ENCODE measurements at regions of chr11 and their contacts with region 1.

Region 1: DNA sequence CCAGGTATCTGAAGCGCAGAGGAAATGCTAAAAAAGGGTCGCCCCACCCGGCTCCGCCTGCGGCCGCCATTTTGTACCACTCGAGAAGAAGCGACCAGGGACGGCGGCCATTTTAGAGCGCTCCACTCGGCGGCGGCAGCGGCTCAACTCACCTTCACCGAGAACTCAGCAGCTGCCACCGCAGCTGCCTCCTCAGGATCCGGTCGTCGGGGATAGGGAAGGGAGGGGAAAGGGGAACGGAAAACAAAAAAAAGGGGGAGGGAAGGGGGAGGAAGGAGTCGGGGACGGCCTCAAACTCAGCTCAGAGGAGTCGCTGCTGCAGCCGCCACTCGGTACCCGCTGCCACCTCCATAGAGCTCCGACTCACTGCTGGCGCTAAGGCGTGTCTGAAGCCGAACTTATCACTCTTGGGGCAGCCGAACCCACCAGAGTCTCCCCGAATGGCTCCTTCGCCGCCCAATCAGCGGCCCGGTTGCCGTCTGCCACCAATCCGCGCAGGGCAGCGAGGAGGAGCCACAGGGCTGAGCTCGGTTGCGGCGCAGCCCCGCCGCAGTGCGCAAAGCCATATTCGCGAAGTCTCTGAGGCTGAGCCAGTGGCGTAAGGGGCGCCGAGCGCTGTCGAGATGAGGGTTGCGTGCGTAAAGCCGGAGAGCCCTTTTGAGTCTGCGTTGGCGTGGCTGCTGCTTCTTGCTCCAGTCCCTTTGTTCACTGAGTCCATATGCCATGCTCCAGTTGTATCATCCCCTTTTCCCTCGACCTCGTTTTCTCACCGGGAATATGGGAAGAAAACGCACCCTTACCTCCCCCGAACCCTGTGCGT is at the start of gene EIF4G2:
- DNase-seq: peak; percentile 96 to 99 (median 97)
- ATAC-seq: peak; percentile 91
- H3K4me3 ChIP-seq: peak within 1 kb of the TSS; percentile 86
- H3K4me3 Mint-ChIP-seq: peak within 1 kb of the TSS; percentile 99
- H3K27ac ChIP-seq: peak within 1 kb of the TSS; percentile 95 to 99
- H3K27ac Mint-ChIP-seq: peak within 1 kb of the TSS; percentile 100
- H3K4me1 ChIP-seq: peaks cover 30% of the 10 kb centered on the region
- H3K4me1 Mint-ChIP-seq: peaks cover 59% of the 10 kb centered on the region
- H3K27me3 ChIP-seq: no peaks in the 10 kb centered on the region
- H3K27me3 Mint-ChIP-seq: no peaks in the 10 kb centered on the region
- CTCF ChIP-seq: no peak
- total RNA-seq, gene EIF4G2: 1,001 to 1,008 TPM

Region 2: DNA sequence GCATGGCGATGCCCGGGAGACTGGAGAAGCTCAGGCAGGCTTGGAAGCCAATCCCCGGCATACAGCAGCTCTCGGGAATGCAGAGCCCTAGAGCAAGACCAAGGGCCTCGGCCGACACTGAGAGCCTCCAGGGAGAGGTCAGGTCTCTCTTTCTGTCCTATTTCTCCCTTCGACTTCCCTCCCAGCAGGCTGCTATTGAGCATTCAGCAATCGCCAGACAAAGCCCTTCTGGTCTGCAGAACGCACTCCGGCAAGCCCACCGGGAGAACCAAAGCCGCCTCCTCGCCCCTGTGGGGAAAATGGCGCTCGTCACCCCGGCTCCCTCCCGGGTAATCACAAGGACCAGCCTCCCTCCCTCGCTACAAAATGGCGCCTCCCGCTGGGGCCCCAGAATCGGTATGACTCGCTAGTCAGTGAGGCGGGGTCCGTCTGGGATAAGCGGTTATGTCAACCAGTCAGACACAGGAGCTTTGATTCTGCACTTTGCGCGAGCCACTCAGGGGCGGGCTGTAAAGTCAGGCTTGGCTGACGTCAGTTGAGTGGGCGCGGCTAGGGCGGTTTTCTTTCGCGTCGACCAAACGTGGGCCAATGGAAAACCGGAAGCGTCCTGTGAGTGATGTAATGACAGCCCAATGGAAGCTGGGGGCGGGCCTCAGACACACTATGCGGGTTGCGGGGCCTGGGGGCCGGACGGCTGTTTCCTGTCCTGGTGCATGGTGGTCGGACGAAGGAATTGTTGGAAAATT is 1348.3 kb before region 1 on chr11 and contains the start of gene ZNF143:
- CTCF ChIA-PET with region 1: no interaction called
- POLR2A ChIA-PET with region 1: interaction called, 15 read pairs
- intact Hi-C with region 1: no loop called
- DNase-seq: peak; percentile 99 to 100 (median 100)
- ATAC-seq: peak; percentile 88
- H3K4me3 ChIP-seq: peak within 1 kb of the TSS; percentile 90
- H3K4me3 Mint-ChIP-seq: peak within 1 kb of the TSS; percentile 99
- H3K27ac ChIP-seq: peak within 1 kb of the TSS; percentile 95 to 97
- H3K27ac Mint-ChIP-seq: peak within 1 kb of the TSS; percentile 100
- H3K4me1 ChIP-seq: peaks cover 29% of the 10 kb centered on the region
- H3K4me1 Mint-ChIP-seq: peaks cover 30% of the 10 kb centered on the region
- H3K27me3 ChIP-seq: no peaks in the 10 kb centered on the region
- H3K27me3 Mint-ChIP-seq: no peaks in the 10 kb centered on the region
- CTCF ChIP-seq: no peak
- total RNA-seq, gene ZNF143: 18.0 to 20.3 TPM

Region 3: GRCh38 chr11:10606536-10607208 is 202.1 kb before region 1 on chr11:
- CTCF ChIA-PET with region 1: no interaction called
- POLR2A ChIA-PET with region 1: no interaction called
- intact Hi-C with region 1: no loop called
- DNase-seq: peak in 3 of 14 experiments; percentile 13 to 43 (median 35)
- ATAC-seq: no peak
- H3K4me3 ChIP-seq: no peak overlapping the region
- H3K4me3 Mint-ChIP-seq: no peak overlapping the region
- H3K27ac ChIP-seq: no peak overlapping the region
- H3K27ac Mint-ChIP-seq: no peak overlapping the region
- H3K4me1 ChIP-seq: peaks cover 3% of the 10 kb centered on the region
- H3K4me1 Mint-ChIP-seq: no peaks in the 10 kb centered on the region
- H3K27me3 ChIP-seq: peaks cover 5 to 20% of the 10 kb centered on the region in 2 experiments
- H3K27me3 Mint-ChIP-seq: peaks cover 34% of the 10 kb centered on the region
- CTCF ChIP-seq: no peak

Region 4: GRCh38 chr11:10770626-10771254 is 38.0 kb before region 1 on chr11:
- CTCF ChIA-PET with region 1: interaction called, 3 read pairs
- POLR2A ChIA-PET with region 1: interaction called, 11 read pairs
- intact Hi-C with region 1: no loop called
- DNase-seq: peak in 6 of 14 experiments; percentile 12 to 43 (median 34)
- ATAC-seq: no peak
- H3K4me3 ChIP-seq: no peak overlapping the region
- H3K4me3 Mint-ChIP-seq: no peak overlapping the region
- H3K27ac ChIP-seq: no peak overlapping the region
- H3K27ac Mint-ChIP-seq: no peak overlapping the region
- H3K4me1 ChIP-seq: no peaks in the 10 kb centered on the region
- H3K4me1 Mint-ChIP-seq: no peaks in the 10 kb centered on the region
- H3K27me3 ChIP-seq: no peaks in the 10 kb centered on the region
- H3K27me3 Mint-ChIP-seq: no peaks in the 10 kb centered on the region
- CTCF ChIP-seq: peak; percentile 58

Region 5: GRCh38 chr11:10838083-10838482 is 29.3 kb after region 1 on chr11:
- CTCF ChIA-PET with region 1: no interaction called
- POLR2A ChIA-PET with region 1: interaction called, 33 read pairs
- intact Hi-C with region 1: no loop called
- DNase-seq: no peak
- ATAC-seq: no peak
- H3K4me3 ChIP-seq: no peak overlapping the region
- H3K4me3 Mint-ChIP-seq: no peak overlapping the region
- H3K27ac ChIP-seq: no peak overlapping the region
- H3K27ac Mint-ChIP-seq: no peak overlapping the region
- H3K4me1 ChIP-seq: no peaks in the 10 kb centered on the region
- H3K4me1 Mint-ChIP-seq: no peaks in the 10 kb centered on the region
- H3K27me3 ChIP-seq: no peaks in the 10 kb centered on the region
- H3K27me3 Mint-ChIP-seq: no peaks in the 10 kb centered on the region
- CTCF ChIP-seq: no peak

Region 6: DNA sequence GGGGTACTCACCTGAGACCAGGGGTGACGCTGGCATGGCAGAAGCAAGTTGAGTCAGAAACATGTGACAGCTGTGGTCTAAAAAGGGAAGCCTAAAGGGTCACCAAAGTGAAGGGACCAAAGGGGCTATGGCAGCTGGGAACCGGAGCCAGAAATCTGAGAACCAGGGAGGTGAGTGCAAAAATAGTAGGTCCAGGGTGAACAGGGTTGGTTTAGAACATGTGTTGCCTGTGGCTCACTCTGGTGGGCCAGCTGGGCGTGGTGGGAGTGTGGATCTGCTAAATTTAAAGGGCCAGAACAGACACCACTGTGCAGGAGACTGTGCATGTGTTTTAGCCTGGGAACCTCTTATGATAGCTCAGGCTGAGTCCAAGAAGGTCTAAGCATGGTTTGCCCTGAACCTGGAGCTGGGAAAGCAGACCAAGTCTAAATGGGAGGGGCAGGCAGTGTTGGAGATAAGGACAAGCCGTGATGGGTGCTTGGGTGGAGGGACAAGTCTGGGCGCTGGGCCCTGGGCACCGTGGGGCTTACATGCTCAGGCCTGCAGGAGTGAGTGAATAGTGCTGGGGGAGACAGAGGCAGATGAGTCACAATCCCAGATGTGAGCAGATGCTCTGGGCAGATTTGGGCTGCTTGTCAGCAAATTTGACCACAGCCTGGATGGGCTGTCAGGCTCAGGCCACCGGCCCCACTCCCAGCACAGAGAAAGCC is 90.5 kb after region 1 on chr11:
- CTCF ChIA-PET with region 1: no interaction called
- POLR2A ChIA-PET with region 1: interaction called, 10 read pairs
- intact Hi-C with region 1: no loop called
- DNase-seq: peak in 3 of 14 experiments; percentile 8 to 38 (median 31)
- ATAC-seq: no peak
- H3K4me3 ChIP-seq: no peak overlapping the region
- H3K4me3 Mint-ChIP-seq: no peak overlapping the region
- H3K27ac ChIP-seq: no peak overlapping the region
- H3K27ac Mint-ChIP-seq: peak overlapping the region; percentile 22
- H3K4me1 ChIP-seq: peaks cover 10% of the 10 kb centered on the region
- H3K4me1 Mint-ChIP-seq: peaks cover 6% of the 10 kb centered on the region
- H3K27me3 ChIP-seq: no peaks in the 10 kb centered on the region
- H3K27me3 Mint-ChIP-seq: no peaks in the 10 kb centered on the region
- CTCF ChIP-seq: no peak

Region 7: GRCh38 chr11:11057472-11057854 is 248.7 kb after region 1 on chr11:
- CTCF ChIA-PET with region 1: no interaction called
- POLR2A ChIA-PET with region 1: no interaction called
- intact Hi-C with region 1: no loop called
- DNase-seq: no peak
- ATAC-seq: no peak
- H3K4me3 ChIP-seq: no peak overlapping the region
- H3K4me3 Mint-ChIP-seq: no peak overlapping the region
- H3K27ac ChIP-seq: no peak overlapping the region
- H3K27ac Mint-ChIP-seq: no peak overlapping the region
- H3K4me1 ChIP-seq: no peaks in the 10 kb centered on the region
- H3K4me1 Mint-ChIP-seq: no peaks in the 10 kb centered on the region
- H3K27me3 ChIP-seq: no peaks in the 10 kb centered on the region
- H3K27me3 Mint-ChIP-seq: no peaks in the 10 kb centered on the region
- CTCF ChIP-seq: no peak

Region 8: DNA sequence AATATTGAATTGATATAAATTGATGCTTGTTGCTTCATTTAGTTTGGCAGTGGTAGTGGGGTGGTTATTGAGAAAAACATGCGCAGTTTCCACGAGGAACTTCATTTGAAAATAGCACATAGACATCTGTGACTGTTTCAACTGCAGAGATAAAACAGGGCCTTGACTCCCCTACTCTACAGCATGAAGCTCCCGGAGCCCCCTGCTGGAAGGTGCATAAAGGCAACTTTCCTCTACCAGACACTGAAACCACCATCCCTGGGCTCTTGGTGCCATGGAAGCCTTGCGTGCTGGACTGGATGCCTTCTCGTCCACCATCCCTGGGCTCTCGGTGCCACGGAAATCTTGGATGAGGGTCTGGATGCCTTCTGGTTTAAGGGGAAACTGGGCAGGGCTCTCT is 348.4 kb after region 1 on chr11:
- CTCF ChIA-PET with region 1: no interaction called
- POLR2A ChIA-PET with region 1: interaction called, 15 read pairs
- intact Hi-C with region 1: no loop called
- DNase-seq: peak; percentile 50 to 84 (median 70)
- ATAC-seq: peak; percentile 67
- H3K4me3 ChIP-seq: no peak overlapping the region
- H3K4me3 Mint-ChIP-seq: peak overlapping the region; percentile 71
- H3K27ac ChIP-seq: no peak overlapping the region
- H3K27ac Mint-ChIP-seq: peak overlapping the region; percentile 92
- H3K4me1 ChIP-seq: peaks cover 33% of the 10 kb centered on the region
- H3K4me1 Mint-ChIP-seq: peaks cover 48% of the 10 kb centered on the region
- H3K27me3 ChIP-seq: no peaks in the 10 kb centered on the region
- H3K27me3 Mint-ChIP-seq: peaks cover 4% of the 10 kb centered on the region
- CTCF ChIP-seq: peak; percentile 80